ENCODE measurements at regions of chr20 and their contacts with region 1.

Region 1: GRCh38 chr20:53934421-53935343 is 135.7 kb downstream of the BCAS1 start:
- DNase-seq: no peak
- ATAC-seq: peak; percentile 77
- H3K4me3 ChIP-seq: peak overlapping the region; percentile 33; the same call in 1 of the 2 replicates
- H3K27ac ChIP-seq: peak overlapping the region; percentile 91
- H3K4me1 ChIP-seq: peaks cover 52% of the 10 kb centered on the region
- H3K27me3 ChIP-seq: no peaks in the 10 kb centered on the region
- CTCF ChIP-seq: 0 out of 6 replicates have a peak, but pooled peaks of 1 of the 3 experiments have one; percentile 4
- EP300 ChIP-seq: no peak
- POLR2A ChIP-seq: 0 out of 2 replicates have a peak, but pooled peaks have one; percentile 4
- RAD21 ChIP-seq: 0 out of 2 replicates have a peak, but pooled peaks have one; percentile 12

Region 2: GRCh38 chr20:53413186-53413631 is 521.5 kb before region 1 on chr20:
- CTCF ChIA-PET with region 1: interaction called, 18 read pairs
- POLR2A ChIA-PET with region 1: no interaction called
- RAD21 ChIA-PET with region 1: interaction called, 24 read pairs
- SMC1A ChIA-PET with region 1: interaction called, 15 read pairs
- in situ Hi-C with region 1: no loop called
- intact Hi-C with region 1: no loop called
- DNase-seq: peak; percentile 52
- ATAC-seq: peak; percentile 98
- H3K4me3 ChIP-seq: no peak overlapping the region
- H3K27ac ChIP-seq: no peak overlapping the region
- H3K4me1 ChIP-seq: peaks cover 2% of the 10 kb centered on the region; the same call in 1 of the 2 replicates
- H3K27me3 ChIP-seq: no peaks in the 10 kb centered on the region
- CTCF ChIP-seq: peak; percentile 87 to 96 (median 90)
- EP300 ChIP-seq: peak in 1 of 2 experiments; percentile 40; a peak in 1 of 4 replicates
- POLR2A ChIP-seq: no peak
- RAD21 ChIP-seq: peak; percentile 93

Region 3: GRCh38 chr20:53839423-53840176 is 95.1 kb before region 1 on chr20:
- CTCF ChIA-PET with region 1: interaction called, 3 read pairs
- POLR2A ChIA-PET with region 1: interaction called, 5 read pairs
- RAD21 ChIA-PET with region 1: interaction called, 6 read pairs
- SMC1A ChIA-PET with region 1: interaction called, 10 read pairs
- in situ Hi-C with region 1: no loop called
- intact Hi-C with region 1: no loop called
- DNase-seq: peak; percentile 96
- ATAC-seq: peak; percentile 78
- H3K4me3 ChIP-seq: no peak overlapping the region
- H3K27ac ChIP-seq: peak overlapping the region; percentile 70
- H3K4me1 ChIP-seq: peaks cover 47% of the 10 kb centered on the region
- H3K27me3 ChIP-seq: no peaks in the 10 kb centered on the region
- CTCF ChIP-seq: no peak
- EP300 ChIP-seq: peak; percentile 39 to 54; a peak in 2 of 4 replicates
- POLR2A ChIP-seq: peak; percentile 53; the same call in 1 of the 2 replicates
- RAD21 ChIP-seq: 0 out of 2 replicates have a peak, but pooled peaks have one; percentile 3

Region 4: GRCh38 chr20:53899351-53900167 is 35.1 kb before region 1 on chr20:
- CTCF ChIA-PET with region 1: interaction called, 24 read pairs
- POLR2A ChIA-PET with region 1: interaction called, 6 read pairs
- RAD21 ChIA-PET with region 1: interaction called, 25 read pairs
- SMC1A ChIA-PET with region 1: interaction called, 49 read pairs
- in situ Hi-C with region 1: no loop called
- intact Hi-C with region 1: no loop called
- DNase-seq: peak; percentile 95
- ATAC-seq: peak; percentile 88
- H3K4me3 ChIP-seq: no peak overlapping the region
- H3K27ac ChIP-seq: peak overlapping the region; percentile 62
- H3K4me1 ChIP-seq: peaks cover 39% of the 10 kb centered on the region
- H3K27me3 ChIP-seq: no peaks in the 10 kb centered on the region
- CTCF ChIP-seq: no peak
- EP300 ChIP-seq: peak in 1 of 2 experiments; percentile 74; a peak in 2 of 4 replicates
- POLR2A ChIP-seq: no peak
- RAD21 ChIP-seq: no peak

Region 5: DNA sequence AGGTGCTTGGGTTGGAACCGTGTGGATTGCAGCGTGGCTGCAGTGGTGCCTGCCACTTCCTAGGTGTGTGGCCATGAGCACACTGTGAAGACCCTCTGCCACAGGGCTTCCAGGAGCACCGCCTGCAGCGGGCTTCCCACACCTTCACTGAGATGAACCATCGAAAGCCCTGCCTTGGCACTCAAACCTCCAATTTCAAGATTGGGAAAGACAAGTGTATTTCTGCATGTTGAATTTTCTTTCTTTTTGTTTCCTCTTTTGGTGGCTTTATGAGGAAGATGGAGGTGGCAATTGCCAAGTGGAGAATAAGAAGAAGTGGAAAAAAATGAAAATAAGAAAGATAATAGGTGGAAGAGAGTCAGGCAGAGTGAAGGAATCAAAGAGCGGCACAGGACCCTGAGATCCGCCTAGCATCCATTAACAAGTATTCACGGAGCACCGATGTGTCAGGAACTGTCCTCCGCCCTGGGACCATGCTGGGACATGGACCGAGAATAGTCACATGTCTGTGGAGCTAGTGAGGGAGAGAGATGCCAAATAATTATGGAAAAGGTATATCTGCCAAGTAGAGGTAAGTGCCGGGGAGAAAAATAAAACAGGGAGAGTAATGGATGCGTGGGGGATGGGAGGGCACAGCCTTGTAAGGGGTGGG is 24.2 kb before region 1 on chr20:
- CTCF ChIA-PET with region 1: interaction called, 258 read pairs
- POLR2A ChIA-PET with region 1: interaction called, 20 read pairs
- RAD21 ChIA-PET with region 1: interaction called, 394 read pairs
- SMC1A ChIA-PET with region 1: interaction called, 384 read pairs
- in situ Hi-C with region 1: no loop called
- intact Hi-C with region 1: loop called (anchors 1 kb)
- DNase-seq: no peak
- ATAC-seq: no peak
- H3K4me3 ChIP-seq: no peak overlapping the region
- H3K27ac ChIP-seq: no peak overlapping the region
- H3K4me1 ChIP-seq: peaks cover 27% of the 10 kb centered on the region
- H3K27me3 ChIP-seq: no peaks in the 10 kb centered on the region
- CTCF ChIP-seq: no peak
- EP300 ChIP-seq: no peak
- POLR2A ChIP-seq: no peak
- RAD21 ChIP-seq: no peak